Gastrocnemius medialis (tissue), 4 donors: ENCODE measurements at regions of chr3 and their contacts with region 1.

Region 1: GRCh38 chr3:10322352-10322710 is 1.4 kb upstream of the SEC13 start:
- DNase-seq: no peak
- ATAC-seq: no peak
- H3K4me3 ChIP-seq: no peak overlapping the region
- H3K27ac ChIP-seq: no peak overlapping the region
- H3K4me1 ChIP-seq: peaks cover 20 to 31% of the 10 kb centered on the region in 2 donors
- H3K27me3 ChIP-seq: no peaks in the 10 kb centered on the region
- CTCF ChIP-seq: no peak
- POLR2A ChIP-seq: no peak

Region 2: DNA sequence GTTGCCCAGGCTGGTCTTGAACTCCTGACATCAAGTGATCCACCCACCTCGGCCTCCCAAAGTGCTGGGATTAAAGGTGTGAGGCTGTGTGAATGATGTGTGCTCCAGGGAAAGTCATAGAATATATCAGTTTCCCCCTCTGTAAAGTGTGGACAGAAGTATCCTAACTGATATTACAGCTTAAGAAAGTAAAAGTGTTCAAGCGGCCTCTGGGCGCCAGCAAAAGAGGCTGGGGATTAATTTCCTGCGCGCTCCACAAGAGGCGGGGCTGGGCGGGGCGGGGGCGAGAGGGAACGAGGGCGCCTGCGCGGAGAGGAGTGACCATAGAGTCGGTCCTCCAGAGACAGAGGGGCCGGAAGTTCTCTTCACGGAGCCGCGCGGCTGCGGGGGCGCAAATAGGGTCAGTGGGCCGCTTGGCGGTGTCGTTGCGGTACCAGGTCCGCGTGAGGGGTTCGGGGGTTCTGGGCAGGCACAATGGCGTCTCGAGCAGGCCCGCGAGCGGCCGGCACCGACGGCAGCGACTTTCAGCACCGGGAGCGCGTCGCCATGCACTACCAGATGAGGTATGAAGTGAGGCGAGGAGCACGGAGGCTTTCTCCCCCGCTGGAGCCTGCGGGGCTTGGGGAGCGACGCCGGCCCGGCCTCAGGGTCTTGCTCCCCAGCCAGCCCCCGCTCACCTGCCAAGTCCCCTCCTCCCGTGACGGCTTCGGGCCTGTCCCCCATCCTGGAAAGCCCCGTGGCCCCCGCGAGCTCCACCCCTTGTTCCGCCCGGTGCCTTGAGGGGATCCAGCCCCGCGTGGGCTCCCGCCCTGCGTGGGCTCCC is 431.9 kb before region 1 on chr3 and contains the start of gene JAGN1:
- in situ Hi-C with region 1: no loop called
- intact Hi-C with region 1: loop called (anchors 1 kb)
- DNase-seq: peak; percentile 83 to 86
- ATAC-seq: peak; percentile 97 to 98
- H3K4me3 ChIP-seq: peak within 1 kb of the TSS; percentile 65 to 100 (median 88)
- H3K27ac ChIP-seq: peak within 1 kb of the TSS; percentile 93 to 100 (median 96)
- H3K4me1 ChIP-seq: peaks cover 7 to 11% of the 10 kb centered on the region in 2 donors
- H3K27me3 ChIP-seq: no peaks in the 10 kb centered on the region
- CTCF ChIP-seq: no peak
- POLR2A ChIP-seq: peak; percentile 91 to 93
- total RNA-seq, gene JAGN1: 42.8 to 96.4 (median 67.0) TPM

Region 3: DNA sequence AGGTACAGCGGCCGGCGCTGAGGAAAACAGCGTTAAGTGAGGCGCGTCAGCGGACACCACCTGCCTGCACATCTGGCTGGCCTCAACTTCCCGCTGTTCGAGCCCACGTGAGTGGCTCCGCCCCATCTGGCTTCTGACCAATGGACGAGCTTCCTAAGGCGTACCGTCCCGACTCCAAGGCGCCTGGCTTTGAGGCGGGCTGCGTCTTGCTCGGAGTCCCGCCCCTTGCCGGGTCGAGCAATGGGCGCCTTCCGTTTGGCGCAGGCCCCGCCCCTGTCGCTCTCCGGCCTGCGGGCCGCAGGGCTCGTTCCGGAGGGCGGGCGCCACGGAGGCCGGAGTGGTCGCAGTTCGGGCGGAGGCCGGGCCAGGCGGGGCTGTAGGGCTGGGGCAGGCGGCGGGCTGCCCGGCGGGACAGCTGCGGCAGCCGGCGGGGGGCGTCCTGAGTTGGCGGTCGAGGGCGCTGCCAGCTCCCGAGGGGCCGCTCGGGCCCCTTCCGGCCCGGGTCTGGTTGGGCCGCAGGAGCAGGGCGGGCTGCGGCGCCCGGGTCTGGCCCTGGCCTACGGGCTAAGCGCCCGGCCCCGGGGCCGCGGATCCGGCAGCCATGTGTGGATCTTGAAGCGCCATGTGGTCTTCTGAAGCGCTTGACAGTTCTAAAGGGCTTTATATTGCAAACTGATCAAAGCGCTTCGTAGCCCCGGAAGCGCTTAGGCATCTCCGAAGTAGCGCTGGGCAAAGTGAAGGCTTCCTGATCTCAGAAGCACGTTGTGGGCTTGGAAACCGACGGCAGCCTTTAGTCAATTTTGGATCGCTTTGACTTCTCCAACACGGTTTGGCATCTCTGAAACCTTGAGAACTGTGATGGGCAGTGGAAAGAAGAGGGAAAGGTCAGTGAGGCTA is 73.9 kb before region 1 on chr3 and contains the start of gene TATDN2:
- in situ Hi-C with region 1: no loop called
- intact Hi-C with region 1: loop called (anchors 1 kb)
- DNase-seq: peak; percentile 97
- ATAC-seq: peak; percentile 95
- H3K4me3 ChIP-seq: peak within 1 kb of the TSS; percentile 60 to 92 (median 81)
- H3K27ac ChIP-seq: peak within 1 kb of the TSS; percentile 77 to 96 (median 84)
- H3K4me1 ChIP-seq: peaks cover 24% of the 10 kb centered on the region in 2 donors
- H3K27me3 ChIP-seq: no peaks in the 10 kb centered on the region
- CTCF ChIP-seq: no peak
- POLR2A ChIP-seq: peak; percentile 93
- total RNA-seq, gene TATDN2: 10.9 to 11.5 (median 10.9) TPM